ENCODE measurements at regions of chr21 and their contacts with region 1.

Region 1: GRCh38 chr21:26769613-26770188 is 75.5 kb downstream of the ADAMTS1 start:
- DNase-seq: no peak
- H3K4me3 ChIP-seq: no peak overlapping the region
- CTCF ChIP-seq: peak; percentile 30

Region 2: GRCh38 chr21:26756491-26757159 is 13.1 kb before region 1 on chr21:
- CTCF ChIA-PET with region 1: interaction called, 23 read pairs
- POLR2A ChIA-PET with region 1: no interaction called
- DNase-seq: peak; percentile 84
- H3K4me3 ChIP-seq: no peak overlapping the region
- CTCF ChIP-seq: no peak

Region 3: DNA sequence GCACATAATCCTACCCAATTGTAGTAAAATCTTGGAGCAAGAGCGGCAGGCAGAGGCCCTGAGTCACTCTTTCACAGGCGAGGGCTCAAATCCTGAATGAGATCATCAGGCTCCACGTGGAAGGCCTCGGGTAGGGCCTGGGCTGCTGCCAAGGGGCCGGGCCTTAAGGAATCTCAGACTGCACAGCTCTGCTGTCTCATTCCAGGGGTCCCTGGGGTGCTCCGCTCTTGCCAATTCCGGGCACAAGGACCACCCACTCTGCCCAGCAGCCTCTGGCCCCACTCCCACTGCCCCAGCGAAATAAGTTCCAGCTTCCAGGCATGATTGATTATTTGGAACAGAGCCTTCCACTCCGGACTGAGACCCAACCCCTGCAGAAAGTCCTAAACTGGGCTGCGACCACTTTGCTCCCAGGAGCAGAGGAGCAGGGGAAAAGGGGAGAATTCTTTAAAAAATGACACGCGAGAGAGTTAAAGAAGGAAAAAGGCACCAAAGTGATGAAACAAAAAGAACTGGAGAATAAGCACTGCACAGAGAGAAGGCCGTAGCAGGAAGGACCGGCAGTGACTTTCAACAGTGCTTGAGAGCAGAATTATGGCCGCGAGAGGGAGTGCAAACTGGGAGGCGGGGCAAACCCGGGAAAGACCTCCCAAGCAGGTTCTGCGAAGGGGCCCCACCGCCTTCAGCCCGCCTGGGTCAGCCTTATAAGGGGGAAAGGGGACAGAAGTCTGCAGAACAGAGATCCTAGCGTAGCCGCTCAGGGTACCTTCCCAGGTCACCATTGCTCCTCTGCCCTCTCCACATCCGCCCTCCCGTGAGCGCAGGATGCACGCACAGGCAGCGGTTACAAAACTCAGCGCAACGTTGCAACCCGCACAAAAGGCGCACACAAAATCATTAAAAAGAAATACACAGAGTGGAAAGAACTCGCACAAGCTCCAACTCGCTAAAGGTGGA is 73.6 kb after region 1 on chr21:
- CTCF ChIA-PET with region 1: interaction called, 15 read pairs
- POLR2A ChIA-PET with region 1: interaction called, 5 read pairs
- DNase-seq: peak; percentile 84
- H3K4me3 ChIP-seq: peak overlapping the region; percentile 98
- CTCF ChIP-seq: peak; percentile 59